PC-9 (cell line): ENCODE measurements at regions of chr3 and their contacts with region 1.

Region 1: GRCh38 chr3:9826815-9827567 is 16.8 kb downstream of the RPUSD3 start:
- DNase-seq: no peak
- H3K4me3 ChIP-seq: no peak overlapping the region
- H3K27ac ChIP-seq: no peak overlapping the region
- H3K4me1 ChIP-seq: no peaks in the 10 kb centered on the region
- H3K27me3 ChIP-seq: no peaks in the 10 kb centered on the region
- CTCF ChIP-seq: peak; percentile 56

Region 2: GRCh38 chr3:9369508-9369907 is 457.5 kb before region 1 on chr3:
- CTCF ChIA-PET with region 1: no interaction called
- POLR2A ChIA-PET with region 1: interaction called, 14 read pairs
- intact Hi-C with region 1: no loop called
- DNase-seq: no peak
- H3K4me3 ChIP-seq: no peak overlapping the region
- H3K27ac ChIP-seq: no peak overlapping the region
- H3K4me1 ChIP-seq: peaks cover 3% of the 10 kb centered on the region; the same call in 1 of the 2 replicates
- H3K27me3 ChIP-seq: no peaks in the 10 kb centered on the region
- CTCF ChIP-seq: no peak

Region 3: DNA sequence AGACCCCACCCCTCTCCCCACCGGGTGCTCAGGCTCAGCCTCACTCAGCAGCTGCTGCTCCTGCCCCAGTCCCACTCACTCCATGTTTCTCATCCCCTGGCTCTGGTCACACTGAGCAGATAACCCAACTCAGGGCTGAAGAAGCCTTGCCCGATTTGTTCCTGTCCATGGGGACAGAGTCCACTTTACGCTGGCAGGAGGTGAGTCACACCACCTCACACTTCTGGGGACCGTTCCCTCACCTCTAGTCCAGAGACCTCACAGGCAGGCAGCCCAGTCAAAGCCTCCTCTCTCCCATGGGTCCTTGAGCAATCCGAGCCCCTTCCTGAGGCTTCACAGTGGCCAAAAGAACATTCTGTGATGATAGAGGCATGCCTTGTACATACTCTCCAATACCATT is 51.7 kb after region 1 on chr3:
- CTCF ChIA-PET with region 1: no interaction called
- POLR2A ChIA-PET with region 1: no interaction called
- intact Hi-C with region 1: no loop called
- DNase-seq: no peak
- H3K4me3 ChIP-seq: no peak overlapping the region
- H3K27ac ChIP-seq: no peak overlapping the region
- H3K4me1 ChIP-seq: peaks cover 31% of the 10 kb centered on the region
- H3K27me3 ChIP-seq: no peaks in the 10 kb centered on the region
- CTCF ChIP-seq: no peak